GM12878 (cell line): ENCODE measurements at regions of chr22 and their contacts with region 1.

Region 1: DNA sequence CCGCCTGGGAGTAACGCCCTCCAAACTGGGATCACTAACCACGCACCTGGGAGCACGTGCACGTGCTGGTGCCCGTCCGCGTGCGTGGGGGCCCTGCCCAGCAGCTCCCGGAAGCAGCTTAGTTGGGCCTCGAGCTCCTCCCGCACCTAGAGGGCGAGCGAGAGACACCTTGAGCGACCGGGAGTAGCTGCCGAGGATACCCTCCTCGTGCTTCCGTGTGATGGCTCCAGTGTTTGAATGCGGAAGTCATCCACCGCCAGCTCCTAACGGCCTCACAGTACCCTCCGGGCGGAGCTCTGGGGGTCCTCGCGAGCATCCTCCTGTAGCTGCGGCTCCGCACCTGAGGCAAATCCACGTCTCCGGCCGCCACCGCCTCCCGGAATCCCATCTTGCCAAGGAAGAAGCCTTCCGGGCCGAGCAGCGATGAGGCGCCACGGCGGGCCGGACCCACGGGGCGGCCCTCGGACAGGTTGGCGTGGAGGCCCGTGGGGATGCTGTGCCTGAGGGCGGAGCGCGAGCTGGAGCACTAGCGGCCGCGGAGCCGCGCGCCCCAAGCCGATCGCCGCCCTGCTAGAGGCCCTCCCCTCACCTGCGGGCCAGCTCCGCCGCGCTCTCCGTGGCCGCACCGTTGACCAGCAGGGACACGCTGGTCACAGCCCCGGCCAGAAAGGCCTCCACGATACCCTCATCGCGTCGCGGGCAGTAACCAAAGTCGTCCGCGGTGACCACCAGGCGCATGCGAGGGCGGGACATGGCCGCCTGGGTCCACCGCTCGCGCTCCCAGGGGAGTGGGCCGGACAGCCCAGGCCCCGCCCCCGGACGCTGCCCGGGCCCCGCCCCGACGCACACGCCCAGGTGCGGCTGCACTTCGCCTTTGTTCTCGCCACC is at the start of gene YDJC:
- DNase-seq: peak; percentile 73
- ATAC-seq: peak; percentile 93
- H3K4me3 ChIP-seq: peak within 1 kb of the TSS; percentile 98
- H3K27ac ChIP-seq: peak within 1 kb of the TSS; percentile 93
- H3K4me1 ChIP-seq: peaks cover 10% of the 10 kb centered on the region; the same call in 1 of the 2 replicates
- H3K27me3 ChIP-seq: no peaks in the 10 kb centered on the region
- CTCF ChIP-seq: peak; percentile 74 to 88 (median 75)
- EP300 ChIP-seq: 0 out of 4 replicates have a peak, but pooled peaks of 1 of the 2 experiments have one; percentile 17
- POLR2A ChIP-seq: peak; percentile 84
- RAD21 ChIP-seq: no peak
- polyA plus RNA-seq, gene YDJC: 1.00 to 4.4 TPM

Region 2: GRCh38 chr22:21567456-21568346 is 61.8 kb before region 1 on chr22 and contains the start of gene UBE2L3:
- CTCF ChIA-PET with region 1: interaction called, 13 read pairs
- POLR2A ChIA-PET with region 1: interaction called, 10 read pairs
- RAD21 ChIA-PET with region 1: interaction called, 3 read pairs
- SMC1A ChIA-PET with region 1: interaction called, 12 read pairs
- in situ Hi-C with region 1: no loop called
- intact Hi-C with region 1: no loop called
- DNase-seq: no peak
- ATAC-seq: peak; percentile 83
- H3K4me3 ChIP-seq: peak within 1 kb of the TSS; percentile 96
- H3K27ac ChIP-seq: peak within 1 kb of the TSS; percentile 90
- H3K4me1 ChIP-seq: peaks cover 9% of the 10 kb centered on the region
- H3K27me3 ChIP-seq: no peaks in the 10 kb centered on the region
- CTCF ChIP-seq: no peak
- EP300 ChIP-seq: no peak
- POLR2A ChIP-seq: peak; percentile 93
- RAD21 ChIP-seq: no peak
- polyA plus RNA-seq, gene UBE2L3: 149 to 168 TPM

Region 3: GRCh38 chr22:21587803-21588611 is 41.5 kb before region 1 on chr22:
- CTCF ChIA-PET with region 1: interaction called, 8 read pairs
- POLR2A ChIA-PET with region 1: no interaction called
- RAD21 ChIA-PET with region 1: interaction called, 8 read pairs
- SMC1A ChIA-PET with region 1: interaction called, 11 read pairs
- in situ Hi-C with region 1: no loop called
- intact Hi-C with region 1: no loop called
- DNase-seq: peak; percentile 78
- ATAC-seq: peak; percentile 98
- H3K4me3 ChIP-seq: peak overlapping the region; percentile 41; the same call in 1 of the 2 replicates
- H3K27ac ChIP-seq: peak overlapping the region; percentile 49
- H3K4me1 ChIP-seq: peaks cover 26% of the 10 kb centered on the region
- H3K27me3 ChIP-seq: no peaks in the 10 kb centered on the region
- CTCF ChIP-seq: no peak
- EP300 ChIP-seq: peak in 1 of 2 experiments; percentile 80; a peak in 2 of 4 replicates
- POLR2A ChIP-seq: no peak
- RAD21 ChIP-seq: no peak

Region 4: DNA sequence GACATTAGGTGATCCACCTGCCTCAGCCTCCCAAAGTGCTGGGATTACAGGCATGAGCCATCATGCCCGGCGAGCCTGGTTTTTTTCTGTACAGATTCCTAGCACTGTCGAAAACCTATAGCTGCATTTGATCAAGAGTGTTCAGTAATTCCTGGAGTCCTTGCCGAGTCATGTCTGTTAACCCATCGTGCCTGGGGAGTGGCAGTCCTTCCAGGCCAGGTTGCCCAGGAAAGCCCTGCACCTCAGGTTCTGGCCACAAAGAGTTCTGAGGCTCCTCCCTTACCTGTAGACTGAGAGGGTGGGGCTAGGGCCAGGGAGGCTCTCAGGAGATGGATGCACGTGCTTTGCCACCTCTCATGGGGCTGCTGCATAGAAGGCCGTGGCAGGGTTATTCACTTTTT is 16.6 kb before region 1 on chr22:
- CTCF ChIA-PET with region 1: interaction called, 14 read pairs
- POLR2A ChIA-PET with region 1: interaction called, 6 read pairs
- RAD21 ChIA-PET with region 1: interaction called, 5 read pairs
- SMC1A ChIA-PET with region 1: interaction called, 6 read pairs
- in situ Hi-C with region 1: no loop called
- intact Hi-C with region 1: no loop called
- DNase-seq: no peak
- ATAC-seq: no peak
- H3K4me3 ChIP-seq: no peak overlapping the region
- H3K27ac ChIP-seq: no peak overlapping the region
- H3K4me1 ChIP-seq: no peaks in the 10 kb centered on the region
- H3K27me3 ChIP-seq: no peaks in the 10 kb centered on the region
- CTCF ChIP-seq: no peak
- EP300 ChIP-seq: no peak
- POLR2A ChIP-seq: no peak
- RAD21 ChIP-seq: no peak

Region 5: GRCh38 chr22:21641789-21642583 is 12.5 kb after region 1 on chr22 and contains the start of gene SDF2L1:
- CTCF ChIA-PET with region 1: interaction called, 106 read pairs
- POLR2A ChIA-PET with region 1: interaction called, 42 read pairs
- RAD21 ChIA-PET with region 1: interaction called, 50 read pairs
- SMC1A ChIA-PET with region 1: interaction called, 39 read pairs
- in situ Hi-C with region 1: no loop called
- intact Hi-C with region 1: no loop called
- DNase-seq: peak; percentile 88
- ATAC-seq: peak; percentile 98
- H3K4me3 ChIP-seq: peak within 1 kb of the TSS; percentile 97
- H3K27ac ChIP-seq: peak within 1 kb of the TSS; percentile 88
- H3K4me1 ChIP-seq: peaks cover 15% of the 10 kb centered on the region
- H3K27me3 ChIP-seq: no peaks in the 10 kb centered on the region
- CTCF ChIP-seq: no peak
- EP300 ChIP-seq: no peak
- POLR2A ChIP-seq: peak; percentile 95
- RAD21 ChIP-seq: no peak
- polyA plus RNA-seq, gene SDF2L1: 3.0 to 17.8 TPM

Region 6: DNA sequence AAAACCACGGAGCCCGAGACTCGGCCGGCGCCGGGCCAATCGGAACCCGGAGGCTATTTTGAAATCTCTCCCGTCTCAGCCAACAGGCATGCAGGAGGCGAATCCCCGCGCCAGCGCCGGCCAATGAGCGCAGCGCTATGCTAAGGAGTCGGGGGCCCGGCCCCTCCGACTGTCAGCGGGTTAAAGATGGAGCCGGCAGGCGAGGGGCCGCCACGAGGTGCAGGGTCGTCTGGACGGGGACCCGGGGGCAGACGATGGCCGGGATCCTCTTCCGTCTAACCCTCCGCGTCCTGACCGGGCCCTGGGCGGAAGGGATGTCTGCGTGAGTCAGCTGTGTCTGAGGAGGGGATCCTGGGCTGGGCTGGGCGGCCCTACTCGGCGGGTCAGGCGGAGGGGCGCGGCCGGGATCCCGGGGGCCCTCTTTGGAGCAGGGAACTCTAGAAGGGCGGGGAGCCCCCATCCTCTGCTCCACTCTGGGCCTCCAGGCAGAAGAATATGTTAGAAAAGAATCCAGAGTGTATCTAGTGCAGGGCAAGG is 22.6 kb after region 1 on chr22:
- CTCF ChIA-PET with region 1: interaction called, 60 read pairs
- POLR2A ChIA-PET with region 1: no interaction called
- RAD21 ChIA-PET with region 1: interaction called, 19 read pairs
- SMC1A ChIA-PET with region 1: interaction called, 23 read pairs
- in situ Hi-C with region 1: no loop called
- intact Hi-C with region 1: no loop called
- DNase-seq: peak; percentile 51
- ATAC-seq: peak; percentile 99
- H3K4me3 ChIP-seq: peak overlapping the region; percentile 73
- H3K27ac ChIP-seq: peak overlapping the region; percentile 89
- H3K4me1 ChIP-seq: peaks cover 3% of the 10 kb centered on the region
- H3K27me3 ChIP-seq: no peaks in the 10 kb centered on the region
- CTCF ChIP-seq: no peak
- EP300 ChIP-seq: no peak
- POLR2A ChIP-seq: peak; percentile 95
- RAD21 ChIP-seq: no peak

Region 7: GRCh38 chr22:21677606-21678443 is 48.3 kb after region 1 on chr22:
- CTCF ChIA-PET with region 1: no interaction called
- POLR2A ChIA-PET with region 1: no interaction called
- RAD21 ChIA-PET with region 1: no interaction called
- SMC1A ChIA-PET with region 1: no interaction called
- in situ Hi-C with region 1: no loop called
- intact Hi-C with region 1: no loop called
- DNase-seq: no peak
- ATAC-seq: no peak
- H3K4me3 ChIP-seq: no peak overlapping the region
- H3K27ac ChIP-seq: no peak overlapping the region
- H3K4me1 ChIP-seq: no peaks in the 10 kb centered on the region; the same call in 1 of the 2 replicates
- H3K27me3 ChIP-seq: no peaks in the 10 kb centered on the region
- CTCF ChIP-seq: no peak
- EP300 ChIP-seq: no peak
- POLR2A ChIP-seq: peak; percentile 30; the same call in 1 of the 2 replicates
- RAD21 ChIP-seq: no peak